Psoas muscle (tissue), 8 donors: ENCODE measurements at regions of chr14 and their contacts with region 1.

Region 1: DNA sequence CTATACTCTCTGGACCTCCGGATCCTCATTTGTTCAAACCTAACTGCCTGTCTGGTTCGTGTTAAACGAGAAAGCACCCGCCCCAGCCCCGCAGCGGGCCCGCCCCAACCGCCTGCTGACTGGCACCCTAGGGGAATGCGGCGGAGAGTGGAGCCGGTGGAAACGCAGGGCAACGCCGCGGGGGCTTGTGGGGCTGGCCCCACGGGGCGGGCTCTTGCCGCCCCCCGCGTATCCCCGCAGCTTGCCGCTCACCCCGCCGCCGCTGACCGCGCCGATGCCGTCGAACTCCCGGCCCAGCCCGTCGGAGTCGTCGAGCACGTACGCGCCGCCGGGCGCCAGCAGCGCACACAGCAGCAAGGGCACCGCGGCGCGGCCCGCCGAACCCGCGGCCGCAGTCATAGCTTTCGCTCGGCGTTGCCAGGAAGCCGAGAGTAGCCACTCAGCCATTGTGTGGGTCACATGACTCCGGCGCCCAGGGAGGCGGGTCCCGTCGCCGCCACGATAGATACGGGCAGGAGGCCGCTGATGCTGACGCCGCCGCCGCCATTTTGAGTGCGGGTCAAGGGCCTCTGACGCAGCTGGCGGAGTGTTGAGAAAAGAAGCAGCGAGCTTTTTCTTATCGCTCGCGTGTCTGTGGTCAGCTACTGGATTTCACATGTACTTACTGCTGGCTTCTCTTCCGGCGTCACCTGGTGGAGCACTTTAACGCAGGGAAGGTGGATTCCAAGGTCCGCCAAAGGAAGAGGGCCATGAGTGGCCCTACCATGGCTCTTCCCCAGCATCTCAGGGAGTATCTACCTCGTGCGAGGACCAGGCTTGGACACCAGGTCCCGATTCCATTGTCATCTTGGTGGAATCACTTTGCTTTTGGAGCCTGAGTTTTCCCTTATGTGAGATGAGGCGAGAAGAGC is at the start of gene GALC:
- DNase-seq: peak; percentile 97
- ATAC-seq: peak; percentile 96 to 98 (median 96)
- H3K4me3 ChIP-seq: peak within 1 kb of the TSS; percentile 84
- H3K27ac ChIP-seq: peak within 1 kb of the TSS; percentile 89
- H3K4me1 ChIP-seq: no peaks in the 10 kb centered on the region
- H3K27me3 ChIP-seq: no peaks in the 10 kb centered on the region
- CTCF ChIP-seq: no peak
- total RNA-seq, gene GALC: 8.5 to 10.2 (median 9.0) TPM

Region 2: DNA sequence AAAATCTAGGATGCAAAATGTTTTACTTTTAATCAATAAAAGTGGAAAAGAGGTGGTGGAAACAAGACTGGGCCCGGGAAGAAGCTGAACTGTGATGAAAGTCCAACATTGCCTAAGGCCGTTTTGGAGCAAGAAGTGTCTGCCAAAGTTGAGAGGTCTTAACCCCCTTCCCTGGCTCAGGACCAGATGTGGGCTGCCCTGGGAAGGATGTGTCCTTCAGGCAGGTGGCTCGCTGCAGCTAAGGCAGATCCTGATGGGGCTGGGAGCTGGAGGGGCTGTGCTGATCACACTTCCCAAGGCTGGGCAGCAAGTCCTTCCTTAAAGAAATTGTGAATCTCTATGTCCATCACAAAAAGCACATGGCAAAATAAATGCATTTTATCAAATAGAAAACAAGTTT is 581.6 kb before region 1 on chr14:
- intact Hi-C with region 1: no loop called
- DNase-seq: no peak
- ATAC-seq: no peak
- H3K4me3 ChIP-seq: no peak overlapping the region
- H3K27ac ChIP-seq: no peak overlapping the region
- H3K4me1 ChIP-seq: no peaks in the 10 kb centered on the region
- H3K27me3 ChIP-seq: no peaks in the 10 kb centered on the region
- CTCF ChIP-seq: no peak

Region 3: GRCh38 chr14:88385345-88386101 is 392.6 kb after region 1 on chr14 and contains the start of gene SPATA7:
- intact Hi-C with region 1: loop called in 1 of 2 experiments (anchors 10 kb)
- DNase-seq: peak; percentile 93 to 95
- ATAC-seq: peak; percentile 97 to 100 (median 99)
- H3K4me3 ChIP-seq: peak within 1 kb of the TSS; percentile 83
- H3K27ac ChIP-seq: peak within 1 kb of the TSS; percentile 71
- H3K4me1 ChIP-seq: no peaks in the 10 kb centered on the region
- H3K27me3 ChIP-seq: no peaks in the 10 kb centered on the region
- CTCF ChIP-seq: no peak
- total RNA-seq, gene SPATA7: 3.3 to 9.7 (median 6.2) TPM